Activated CD8-positive, alpha-beta T cell treated with anti-CD3 and anti-CD28 coated beads for 36 hours (primary cell): ENCODE measurements at regions of chr6 and their contacts with region 1.

Region 1: DNA sequence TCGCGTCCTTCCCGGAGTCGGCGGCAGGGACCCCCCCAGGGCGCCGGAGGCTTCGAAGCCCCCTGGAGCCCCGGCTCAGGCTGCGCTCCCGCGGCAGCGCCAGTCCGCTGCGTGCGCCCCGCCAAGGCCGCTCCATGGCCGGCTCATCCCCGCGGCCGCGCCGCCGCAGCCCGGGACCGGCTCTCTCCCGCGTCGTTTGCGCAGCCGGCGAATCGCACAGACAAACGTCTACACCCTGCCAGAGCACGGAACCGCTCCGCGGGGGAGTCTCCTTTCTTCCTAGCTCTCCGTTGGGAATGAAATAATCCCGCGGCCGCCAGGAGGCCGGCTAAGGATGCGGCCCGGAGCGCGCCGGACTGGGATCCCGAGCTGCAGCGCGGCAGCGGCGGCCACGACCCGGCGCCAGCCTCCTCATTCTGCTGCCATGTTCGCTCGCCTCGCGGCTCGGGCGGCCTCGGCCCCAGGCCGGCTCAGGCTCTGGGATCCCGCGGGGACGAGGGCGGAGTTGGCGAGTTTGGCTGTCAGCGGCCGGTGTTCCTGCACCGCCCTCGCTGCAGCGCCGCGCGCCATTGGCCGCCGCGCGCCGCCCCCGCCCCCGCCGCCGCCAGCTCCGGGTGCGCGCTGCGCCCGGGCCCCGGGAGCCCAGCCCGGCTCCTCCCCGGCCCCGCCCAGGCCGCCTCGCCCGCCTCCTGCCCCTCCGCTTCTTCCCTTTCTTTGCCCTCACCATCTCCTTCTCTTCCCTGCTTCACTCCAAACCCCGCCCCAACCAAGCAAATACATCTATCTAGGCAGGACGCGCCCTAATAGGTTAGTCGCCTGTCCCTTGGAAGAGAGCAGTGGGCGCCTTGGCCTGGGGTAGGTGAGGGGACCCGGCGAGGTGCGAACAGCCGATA is at the start of gene GFOD1:
- DNase-seq: peak; percentile 83
- ATAC-seq: peak; percentile 79
- H3K4me3 Mint-ChIP-seq: peak within 1 kb of the TSS; percentile 85
- H3K27ac Mint-ChIP-seq: peak within 1 kb of the TSS; percentile 91
- H3K4me1 Mint-ChIP-seq: peaks cover 38% of the 10 kb centered on the region
- H3K27me3 Mint-ChIP-seq: peaks cover 3% of the 10 kb centered on the region
- CTCF ChIP-seq: peak; percentile 34
- total RNA-seq, gene GFOD1: 12.3 to 12.9 TPM

Region 2: GRCh38 chr6:13328076-13328874 is 159.1 kb before region 1 on chr6 and contains the start of gene TBC1D7:
- CTCF ChIA-PET with region 1: interaction called, 12 read pairs
- POLR2A ChIA-PET with region 1: interaction called, 11 read pairs
- intact Hi-C with region 1: loop called (anchors 10 kb)
- DNase-seq: peak; percentile 93
- ATAC-seq: peak; percentile 91
- H3K4me3 Mint-ChIP-seq: peak within 1 kb of the TSS; percentile 93
- H3K27ac Mint-ChIP-seq: peak within 1 kb of the TSS; percentile 93
- H3K4me1 Mint-ChIP-seq: peaks cover 22% of the 10 kb centered on the region
- H3K27me3 Mint-ChIP-seq: no peaks in the 10 kb centered on the region
- CTCF ChIP-seq: peak; percentile 16
- total RNA-seq, gene TBC1D7: 21.3 to 23.8 TPM

Region 3: DNA sequence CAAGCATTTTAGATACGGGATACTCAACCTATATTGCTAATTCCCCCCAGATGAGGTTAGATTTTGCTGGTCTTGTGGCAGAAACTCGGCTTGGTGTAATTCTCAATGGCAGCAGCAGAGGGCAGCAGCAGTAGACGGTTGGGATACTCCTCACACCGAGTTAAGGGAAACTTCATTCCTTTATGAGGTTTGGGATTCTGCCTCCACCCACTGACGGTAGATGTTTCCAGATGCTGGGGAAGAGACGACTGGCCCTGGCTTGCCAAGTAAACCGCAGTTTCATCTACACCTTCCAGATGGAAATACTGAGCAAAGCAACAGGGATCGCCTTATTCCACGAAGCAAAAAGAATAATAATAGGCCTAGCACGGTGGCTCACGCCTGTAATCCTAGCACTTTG is 150.8 kb before region 1 on chr6:
- CTCF ChIA-PET with region 1: interaction called, 4 read pairs
- POLR2A ChIA-PET with region 1: no interaction called
- intact Hi-C with region 1: loop called (anchors 10 kb)
- DNase-seq: peak; percentile 88
- ATAC-seq: peak; percentile 86
- H3K4me3 Mint-ChIP-seq: no peak overlapping the region
- H3K27ac Mint-ChIP-seq: no peak overlapping the region
- H3K4me1 Mint-ChIP-seq: peaks cover 4% of the 10 kb centered on the region
- H3K27me3 Mint-ChIP-seq: no peaks in the 10 kb centered on the region
- CTCF ChIP-seq: peak; percentile 97

Region 4: DNA sequence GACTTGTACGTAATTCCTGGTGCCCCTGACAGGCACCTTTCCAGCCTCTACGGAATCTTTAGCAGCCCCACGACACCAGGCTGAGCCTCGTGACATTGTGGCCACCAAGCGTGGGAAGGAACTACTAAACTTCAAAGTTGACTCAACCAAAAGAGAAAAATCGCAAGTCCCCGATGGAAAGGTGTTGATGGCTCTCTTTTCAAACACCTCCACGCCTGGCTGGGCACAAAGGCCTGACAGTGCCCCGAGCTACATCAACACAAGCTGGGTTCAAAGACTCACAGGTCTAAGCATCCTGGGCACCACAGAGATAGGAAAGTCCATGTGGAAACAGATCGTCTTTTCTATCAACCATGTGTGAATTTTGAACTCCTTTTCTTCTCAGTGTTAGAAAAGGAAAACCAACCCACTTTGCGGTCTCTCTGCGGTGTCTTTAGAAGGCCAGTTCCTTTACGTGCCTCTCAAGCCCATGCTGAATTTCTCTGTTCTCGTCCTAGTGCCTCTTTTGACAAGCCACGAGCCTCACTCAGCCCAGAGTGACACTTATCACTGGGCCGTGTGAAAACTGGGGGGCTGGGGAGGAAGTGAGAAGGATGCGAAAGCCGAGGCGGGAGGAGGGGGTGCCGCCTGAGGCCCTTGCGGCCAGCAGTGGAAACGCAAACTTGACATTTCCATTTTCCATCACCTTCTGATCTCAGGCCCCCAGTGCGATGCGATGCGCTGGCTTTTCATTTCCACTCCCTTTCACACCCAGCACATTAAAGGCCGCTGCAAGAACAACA is 59.4 kb before region 1 on chr6:
- CTCF ChIA-PET with region 1: interaction called, 6 read pairs
- POLR2A ChIA-PET with region 1: interaction called, 5 read pairs
- intact Hi-C with region 1: loop called (anchors 5 kb)
- DNase-seq: peak; percentile 94
- ATAC-seq: peak; percentile 78
- H3K4me3 Mint-ChIP-seq: peak overlapping the region; percentile 54
- H3K27ac Mint-ChIP-seq: peak overlapping the region; percentile 97
- H3K4me1 Mint-ChIP-seq: peaks cover 82% of the 10 kb centered on the region
- H3K27me3 Mint-ChIP-seq: no peaks in the 10 kb centered on the region
- CTCF ChIP-seq: peak; percentile 47

Region 5: GRCh38 chr6:13454286-13455221 is 32.8 kb before region 1 on chr6:
- CTCF ChIA-PET with region 1: interaction called, 4 read pairs
- POLR2A ChIA-PET with region 1: interaction called, 29 read pairs
- intact Hi-C with region 1: loop called (anchors 2 kb)
- DNase-seq: peak; percentile 91
- ATAC-seq: peak; percentile 62
- H3K4me3 Mint-ChIP-seq: peak overlapping the region; percentile 9
- H3K27ac Mint-ChIP-seq: peak overlapping the region; percentile 87
- H3K4me1 Mint-ChIP-seq: peaks cover 71% of the 10 kb centered on the region
- H3K27me3 Mint-ChIP-seq: no peaks in the 10 kb centered on the region
- CTCF ChIP-seq: no peak

Region 6: GRCh38 chr6:13500915-13501314 is 13.5 kb after region 1 on chr6:
- CTCF ChIA-PET with region 1: no interaction called
- POLR2A ChIA-PET with region 1: no interaction called
- intact Hi-C with region 1: no loop called
- DNase-seq: no peak
- ATAC-seq: no peak
- H3K4me3 Mint-ChIP-seq: no peak overlapping the region
- H3K27ac Mint-ChIP-seq: no peak overlapping the region
- H3K4me1 Mint-ChIP-seq: peaks cover 6% of the 10 kb centered on the region
- H3K27me3 Mint-ChIP-seq: no peaks in the 10 kb centered on the region
- CTCF ChIP-seq: no peak

Region 7: DNA sequence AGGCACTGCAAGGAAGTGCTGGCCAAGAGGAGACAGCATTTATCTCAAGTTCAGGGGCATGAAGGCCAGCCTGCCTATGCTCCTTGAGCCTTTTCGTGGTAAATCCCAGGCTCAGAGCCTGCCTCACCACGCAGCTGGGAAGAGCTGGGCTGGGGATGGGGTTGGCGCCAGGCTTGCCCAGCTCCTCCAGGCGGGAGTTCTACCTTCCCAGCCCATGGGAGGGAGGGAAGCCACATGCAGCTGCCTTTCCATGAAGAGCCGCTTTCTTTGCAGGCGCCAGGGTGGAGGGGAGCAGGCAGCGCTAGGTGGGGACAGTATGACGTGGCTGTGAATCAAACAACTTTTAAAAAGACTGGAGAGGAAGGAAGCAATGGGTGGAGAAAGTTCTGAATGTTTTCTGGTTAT is 67.6 kb after region 1 on chr6:
- CTCF ChIA-PET with region 1: no interaction called
- POLR2A ChIA-PET with region 1: no interaction called
- intact Hi-C with region 1: no loop called
- DNase-seq: no peak
- ATAC-seq: no peak
- H3K4me3 Mint-ChIP-seq: no peak overlapping the region
- H3K27ac Mint-ChIP-seq: no peak overlapping the region
- H3K4me1 Mint-ChIP-seq: no peaks in the 10 kb centered on the region
- H3K27me3 Mint-ChIP-seq: peaks cover 4% of the 10 kb centered on the region
- CTCF ChIP-seq: no peak